ENCODE measurements at regions of chr10 and their contacts with region 1.

Region 1: GRCh38 chr10:44932517-44933450 is 21.6 kb downstream of the TMEM72 start:
- DNase-seq: peak; percentile 89
- H3K4me3 Mint-ChIP-seq: no peak overlapping the region
- H3K27ac Mint-ChIP-seq: no peak overlapping the region
- H3K4me1 Mint-ChIP-seq: peaks cover 11% of the 10 kb centered on the region
- H3K27me3 Mint-ChIP-seq: peaks cover 21% of the 10 kb centered on the region

Region 2: GRCh38 chr10:44761076-44761475 is 171.7 kb before region 1 on chr10:
- CTCF ChIA-PET with region 1: no interaction called
- DNase-seq: no peak
- H3K4me3 Mint-ChIP-seq: no peak overlapping the region
- H3K27ac Mint-ChIP-seq: no peak overlapping the region
- H3K4me1 Mint-ChIP-seq: no peaks in the 10 kb centered on the region
- H3K27me3 Mint-ChIP-seq: peaks cover 4% of the 10 kb centered on the region

Region 3: DNA sequence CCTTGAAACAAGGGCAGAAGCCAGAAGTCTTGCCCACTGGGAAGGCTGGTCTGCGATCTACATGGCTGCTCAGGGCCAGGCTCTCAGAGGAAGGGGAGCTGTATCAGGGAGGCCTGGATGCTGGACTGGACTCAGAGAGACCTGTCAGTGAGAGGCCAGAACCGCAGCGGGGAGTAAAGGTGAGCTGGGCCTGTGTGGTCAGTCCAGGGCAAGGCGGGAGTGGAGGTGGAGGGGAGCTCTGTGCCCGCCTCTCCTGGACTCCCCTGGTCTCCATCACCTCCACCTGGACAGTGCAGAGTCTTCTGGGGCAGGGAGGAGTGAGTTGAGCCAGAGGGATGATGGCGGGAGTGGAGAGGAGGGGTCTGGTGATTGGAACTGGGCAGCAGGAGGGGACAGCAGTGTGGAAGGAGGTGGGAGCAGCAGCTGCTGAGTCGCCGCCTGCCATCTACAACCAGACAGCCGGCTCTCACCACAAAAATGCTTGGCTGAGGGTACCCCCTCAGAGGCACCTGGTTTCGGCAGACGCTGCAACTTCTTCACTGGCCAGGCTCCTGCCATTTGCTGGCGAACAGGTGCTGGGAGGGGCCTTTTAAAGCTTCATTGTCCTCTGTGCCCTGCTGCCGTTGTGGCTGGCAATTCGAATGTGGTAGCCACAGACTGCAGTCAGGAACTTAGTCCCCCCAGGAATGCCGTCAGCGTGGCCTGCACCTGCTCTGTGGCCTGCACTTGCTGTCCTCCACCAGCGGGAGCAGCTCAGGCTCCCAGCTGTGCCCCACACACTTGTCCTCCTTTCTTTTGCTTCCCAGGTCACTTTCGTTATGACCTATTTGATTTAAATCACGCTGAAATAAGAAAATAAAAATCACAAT is 30.3 kb after region 1 on chr10:
- CTCF ChIA-PET with region 1: interaction called, 11 read pairs
- DNase-seq: no peak
- H3K4me3 Mint-ChIP-seq: no peak overlapping the region
- H3K27ac Mint-ChIP-seq: no peak overlapping the region
- H3K4me1 Mint-ChIP-seq: peaks cover 25% of the 10 kb centered on the region
- H3K27me3 Mint-ChIP-seq: peaks cover 13% of the 10 kb centered on the region

Region 4: GRCh38 chr10:44974628-44975431 is 42.0 kb after region 1 on chr10:
- CTCF ChIA-PET with region 1: interaction called, 32 read pairs
- DNase-seq: peak; percentile 68
- H3K4me3 Mint-ChIP-seq: peak overlapping the region; percentile 57
- H3K27ac Mint-ChIP-seq: peak overlapping the region; percentile 60
- H3K4me1 Mint-ChIP-seq: peaks cover 29% of the 10 kb centered on the region
- H3K27me3 Mint-ChIP-seq: peaks cover 13% of the 10 kb centered on the region

Region 5: DNA sequence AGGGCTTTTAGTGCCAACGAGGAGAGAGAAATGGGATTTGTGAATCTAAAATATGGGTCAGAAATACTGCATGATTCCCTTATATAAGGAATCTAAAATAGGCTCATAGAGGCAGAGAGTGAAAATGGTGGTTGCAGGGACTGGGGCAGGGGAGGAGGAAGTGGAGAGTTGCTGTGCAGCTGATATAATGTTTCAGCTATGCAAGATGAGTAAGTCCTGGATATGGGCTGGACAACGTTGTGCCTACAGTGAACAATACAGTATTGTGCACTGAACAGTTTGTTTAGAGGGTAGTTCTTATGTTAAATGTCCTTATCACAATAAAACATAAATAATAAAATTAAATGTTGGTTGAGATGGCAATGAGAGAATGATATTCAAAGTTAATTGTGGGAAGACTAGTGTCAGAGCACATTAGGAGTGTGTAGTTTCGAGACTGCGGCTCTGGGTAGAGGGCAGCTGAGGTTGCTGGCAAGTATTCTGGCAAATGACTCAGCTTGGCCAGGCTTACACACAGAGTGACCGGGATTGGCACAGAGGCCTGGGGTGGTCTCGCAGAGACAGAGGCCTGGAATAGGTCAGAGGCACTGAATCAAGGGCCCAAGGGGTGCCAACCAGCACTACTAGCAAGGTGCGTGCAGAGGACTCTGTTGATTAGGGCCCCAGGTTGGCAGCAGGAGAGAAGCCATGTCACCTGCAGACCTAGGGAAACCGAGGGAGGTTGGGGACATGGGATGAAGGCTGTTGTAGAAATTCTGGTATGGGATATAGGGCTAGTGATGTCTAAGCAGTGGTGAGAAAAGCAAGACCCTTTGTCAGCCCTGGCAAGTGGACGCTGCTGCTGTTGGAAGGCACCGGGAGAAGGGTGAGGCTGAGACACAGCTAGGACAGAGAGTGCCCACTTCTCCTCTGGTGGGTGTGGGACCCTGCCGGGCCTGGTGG is 48.7 kb after region 1 on chr10:
- CTCF ChIA-PET with region 1: interaction called, 15 read pairs
- DNase-seq: no peak
- H3K4me3 Mint-ChIP-seq: no peak overlapping the region
- H3K27ac Mint-ChIP-seq: no peak overlapping the region
- H3K4me1 Mint-ChIP-seq: peaks cover 12% of the 10 kb centered on the region
- H3K27me3 Mint-ChIP-seq: peaks cover 29% of the 10 kb centered on the region

Region 6: GRCh38 chr10:44986670-44987069 is 53.9 kb after region 1 on chr10:
- CTCF ChIA-PET with region 1: interaction called, 11 read pairs
- DNase-seq: no peak
- H3K4me3 Mint-ChIP-seq: no peak overlapping the region
- H3K27ac Mint-ChIP-seq: no peak overlapping the region
- H3K4me1 Mint-ChIP-seq: peaks cover 2% of the 10 kb centered on the region
- H3K27me3 Mint-ChIP-seq: peaks cover 41% of the 10 kb centered on the region

Region 7: GRCh38 chr10:45003432-45004000 is 70.7 kb after region 1 on chr10:
- CTCF ChIA-PET with region 1: interaction called, 11 read pairs
- DNase-seq: no peak
- H3K4me3 Mint-ChIP-seq: no peak overlapping the region
- H3K27ac Mint-ChIP-seq: no peak overlapping the region
- H3K4me1 Mint-ChIP-seq: peaks cover 32% of the 10 kb centered on the region
- H3K27me3 Mint-ChIP-seq: peaks cover 22% of the 10 kb centered on the region

Measured in activated naive CD4-positive, alpha-beta T cell treated with anti-CD3 and anti-CD28 coated beads, Interleukin-2, amount 10 ng/mL, durations not matched to agents 7 days and 5 days (primary cell).